K562 (cell line): ENCODE measurements at regions of chr2 and their contacts with region 1.

Region 1: DNA sequence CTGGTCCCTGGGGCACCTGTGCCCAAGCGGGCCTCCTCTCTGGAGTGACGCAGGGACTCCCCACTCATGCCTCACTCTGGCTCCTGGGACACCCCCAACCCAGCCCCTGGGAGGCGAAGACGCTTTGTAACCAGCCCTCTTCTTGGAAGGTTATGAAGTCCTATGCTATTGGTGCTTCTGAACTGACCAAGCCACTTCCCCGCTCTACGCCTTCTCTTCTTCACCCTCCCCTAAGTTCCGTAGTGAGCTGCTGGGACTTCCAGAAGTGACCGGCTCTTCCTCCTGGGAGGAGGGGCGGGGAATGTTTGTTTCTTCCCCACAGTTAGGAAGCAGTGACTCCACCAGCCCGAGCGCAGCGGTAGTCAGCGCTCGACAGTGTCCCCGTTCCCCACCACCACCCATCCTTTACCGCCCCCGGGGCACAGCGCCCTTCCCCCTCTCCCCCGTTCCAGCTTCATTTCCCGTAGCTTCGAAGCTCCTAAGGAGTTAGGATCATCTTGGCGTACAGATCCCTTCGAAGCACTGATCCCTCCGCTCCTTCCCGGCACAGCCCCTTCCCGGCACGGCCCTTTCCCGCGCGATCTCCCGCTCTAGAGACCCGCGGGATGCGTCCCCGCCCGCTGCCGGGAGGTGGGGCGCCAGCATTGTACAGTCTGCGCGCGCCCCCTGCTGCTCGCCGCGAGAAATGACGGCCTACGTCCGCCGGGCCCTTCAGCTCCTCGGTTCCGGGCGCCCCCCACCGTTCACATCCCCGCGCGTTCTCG is 25.3 kb upstream of the NOTO start:
- DNase-seq: peak; percentile 93 to 95 (median 94)
- ATAC-seq: peak; percentile 93
- H3K4me3 ChIP-seq: peak overlapping the region; percentile 31
- H3K27ac ChIP-seq: no peak overlapping the region
- H3K4me1 ChIP-seq: peaks cover 11 to 29% of the 10 kb centered on the region in 2 experiments; a peak in 4 of 5 replicates
- H3K27me3 ChIP-seq: peaks cover 3 to 35% of the 10 kb centered on the region in 2 experiments; a peak in 3 of 5 replicates
- CTCF ChIP-seq: peak; percentile 95 to 99 (median 99)
- EP300 ChIP-seq: no peak
- POLR2A ChIP-seq: no peak
- RAD21 ChIP-seq: peak; percentile 96 to 97

Region 2: DNA sequence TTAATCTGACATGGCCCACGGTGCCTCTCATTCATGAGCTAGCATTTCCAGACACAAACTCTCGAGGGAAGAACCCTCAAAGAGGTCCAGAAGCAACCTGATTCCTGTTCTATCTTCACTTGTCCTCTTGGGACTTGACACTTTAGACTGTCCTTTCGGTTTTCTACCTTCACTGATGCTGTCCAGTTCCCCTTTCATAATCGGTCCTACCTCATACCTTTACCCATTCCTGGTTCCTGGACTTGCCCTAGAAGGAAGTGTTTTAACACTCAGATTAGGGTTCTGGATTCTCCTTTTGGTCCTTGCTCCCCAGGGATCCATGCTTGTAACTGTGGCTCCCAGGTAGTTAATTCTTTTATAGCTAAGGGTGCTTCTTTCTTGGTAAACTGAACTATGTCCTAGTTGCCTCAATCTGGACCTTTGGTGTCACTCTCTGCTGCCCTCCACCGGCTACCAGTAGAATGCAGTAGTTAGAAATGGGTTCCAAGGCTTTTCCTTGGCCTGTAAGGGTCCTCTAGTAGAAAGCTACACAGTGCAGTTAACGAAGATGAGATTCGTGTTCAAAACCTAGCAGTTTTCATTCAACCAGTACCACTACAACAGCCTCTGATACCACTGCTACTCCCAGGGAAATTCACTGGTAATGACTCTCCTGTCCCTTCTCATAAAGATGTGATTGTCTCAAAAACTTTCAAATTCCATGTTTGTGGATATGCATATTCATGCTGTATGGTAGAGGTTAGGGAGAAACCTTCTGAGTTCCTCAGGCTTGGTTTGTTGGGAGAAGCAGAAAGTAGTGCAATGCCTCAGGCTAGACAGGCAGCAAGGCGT is 851.3 kb before region 1 on chr2:
- CTCF ChIA-PET with region 1: no interaction called
- POLR2A ChIA-PET with region 1: no interaction called
- in situ Hi-C with region 1: no loop called
- intact Hi-C with region 1: no loop called
- DNase-seq: peak; percentile 24 to 51 (median 30)
- ATAC-seq: peak; percentile 85
- H3K4me3 ChIP-seq: no peak overlapping the region
- H3K27ac ChIP-seq: no peak overlapping the region
- H3K4me1 ChIP-seq: no peaks in the 10 kb centered on the region
- H3K27me3 ChIP-seq: no peaks in the 10 kb centered on the region
- CTCF ChIP-seq: peak; percentile 55 to 71 (median 67)
- EP300 ChIP-seq: no peak
- POLR2A ChIP-seq: no peak
- RAD21 ChIP-seq: peak; percentile 22 to 53

Region 3: DNA sequence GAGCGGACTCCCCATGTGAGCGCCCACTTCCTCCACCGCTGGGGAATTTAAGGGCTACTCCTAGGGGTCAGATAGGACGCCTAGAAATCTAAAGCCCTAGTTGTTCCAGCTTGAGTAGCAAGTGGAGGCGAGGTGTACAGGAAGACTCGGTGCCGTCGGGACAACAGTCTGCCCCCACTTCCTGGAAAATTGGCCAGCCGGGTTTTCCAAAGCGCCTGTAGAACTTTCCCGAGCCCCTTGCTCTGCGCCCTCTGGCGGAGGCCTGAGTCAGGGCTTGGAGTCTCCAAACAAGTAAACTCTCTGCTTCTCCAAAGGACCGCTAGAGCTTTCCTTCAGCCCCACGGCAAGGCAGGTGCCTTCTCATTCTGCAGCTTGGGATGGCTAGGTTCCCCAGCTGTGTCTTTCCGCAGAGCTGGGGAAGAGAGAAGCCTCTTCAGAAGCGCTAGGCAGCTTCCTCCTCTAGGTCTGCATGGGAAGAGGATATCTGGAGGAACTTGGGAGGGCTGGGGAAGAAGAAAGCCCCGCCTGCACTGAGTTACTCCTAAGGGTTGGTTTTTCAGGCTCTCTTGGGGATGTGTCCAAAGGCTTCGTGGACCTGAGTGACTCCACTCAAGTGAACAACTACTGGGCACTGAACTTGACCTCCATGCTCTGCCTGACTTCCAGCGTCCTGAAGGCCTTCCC is 289.2 kb before region 1 on chr2:
- CTCF ChIA-PET with region 1: interaction called, 56 read pairs
- POLR2A ChIA-PET with region 1: interaction called, 3 read pairs
- in situ Hi-C with region 1: no loop called
- intact Hi-C with region 1: loop called (anchors 1 kb)
- DNase-seq: peak; percentile 77 to 90 (median 81)
- ATAC-seq: peak; percentile 87
- H3K4me3 ChIP-seq: peak overlapping the region; percentile 85
- H3K27ac ChIP-seq: peak overlapping the region; percentile 62; the same call in 2 of the 3 replicates
- H3K4me1 ChIP-seq: peaks cover 9 to 15% of the 10 kb centered on the region in 2 experiments; a peak in 4 of 5 replicates
- H3K27me3 ChIP-seq: 0 out of 5 replicates have a peak, but pooled peaks cover 3 to 5% of the 10 kb centered on the region in 2 experiments
- CTCF ChIP-seq: peak; percentile 91 to 97 (median 94)
- EP300 ChIP-seq: peak; percentile 3; the same call in 1 of the 2 replicates
- POLR2A ChIP-seq: no peak
- RAD21 ChIP-seq: peak; percentile 41 to 64

Region 4: DNA sequence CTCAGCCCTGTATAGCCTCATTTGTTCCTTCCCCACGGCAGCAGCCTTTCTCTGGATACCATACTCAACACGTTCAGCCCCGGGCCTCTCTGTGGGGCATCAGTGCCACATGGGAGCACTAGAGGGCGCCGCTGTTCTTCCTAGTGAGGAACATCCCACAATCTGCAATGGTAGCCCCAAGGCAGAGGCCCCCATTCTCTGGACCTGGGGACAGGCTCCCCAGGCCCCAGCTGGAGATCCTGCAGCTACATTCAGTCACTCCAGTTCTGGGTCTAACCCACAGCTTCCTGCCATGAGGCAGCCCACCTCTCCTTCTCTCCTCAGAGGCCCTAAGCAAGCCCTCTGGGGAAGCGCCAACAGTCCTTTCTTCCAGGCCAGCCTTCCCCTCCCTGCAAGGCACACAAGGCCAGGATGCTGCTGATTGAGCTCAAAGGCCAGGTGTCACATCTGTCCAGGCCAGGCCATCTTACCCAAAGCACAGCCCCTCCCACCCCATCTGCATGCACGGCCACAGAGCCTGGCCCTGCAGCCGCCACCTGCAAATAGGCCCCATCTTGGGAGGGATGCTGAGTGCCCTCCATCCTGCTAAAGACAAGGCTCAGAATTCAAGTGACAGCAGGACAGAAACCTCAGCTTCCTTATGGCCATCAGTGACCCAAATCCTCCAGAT is 91.2 kb before region 1 on chr2:
- CTCF ChIA-PET with region 1: interaction called, 16 read pairs
- POLR2A ChIA-PET with region 1: no interaction called
- in situ Hi-C with region 1: no loop called
- intact Hi-C with region 1: loop called (anchors 5 kb)
- DNase-seq: peak; percentile 78 to 83 (median 80)
- ATAC-seq: peak; percentile 96
- H3K4me3 ChIP-seq: no peak overlapping the region
- H3K27ac ChIP-seq: no peak overlapping the region
- H3K4me1 ChIP-seq: peaks cover 0 to 12% of the 10 kb centered on the region in 2 experiments; a peak in 4 of 5 replicates
- H3K27me3 ChIP-seq: no peaks in the 10 kb centered on the region
- CTCF ChIP-seq: peak; percentile 91 to 94 (median 93)
- EP300 ChIP-seq: no peak
- POLR2A ChIP-seq: no peak
- RAD21 ChIP-seq: peak; percentile 95

Region 5: GRCh38 chr2:73212448-73213176 is 35.5 kb after region 1 on chr2:
- CTCF ChIA-PET with region 1: interaction called, 7 read pairs
- POLR2A ChIA-PET with region 1: interaction called, 3 read pairs
- in situ Hi-C with region 1: no loop called
- intact Hi-C with region 1: loop called (anchors 1 kb)
- DNase-seq: peak; percentile 76 to 84 (median 80)
- ATAC-seq: peak; percentile 84
- H3K4me3 ChIP-seq: no peak overlapping the region
- H3K27ac ChIP-seq: no peak overlapping the region
- H3K4me1 ChIP-seq: peaks cover 15 to 23% of the 10 kb centered on the region in 2 experiments; a peak in 4 of 5 replicates
- H3K27me3 ChIP-seq: no peaks in the 10 kb centered on the region
- CTCF ChIP-seq: peak; percentile 86 to 96 (median 87)
- EP300 ChIP-seq: no peak
- POLR2A ChIP-seq: no peak
- RAD21 ChIP-seq: peak; percentile 59 to 70